ENCODE measurements at regions of chr7 and their contacts with region 1.

Region 1: GRCh38 chr7:14691597-14692203 is 210.9 kb downstream of the DGKB start:
- DNase-seq: peak in 4 of 5 donors; percentile 24 to 54 (median 34)
- H3K4me3 ChIP-seq: no peak overlapping the region
- H3K27ac ChIP-seq: no peak overlapping the region
- H3K4me1 ChIP-seq: no peaks in the 10 kb centered on the region
- H3K27me3 ChIP-seq: no peaks in the 10 kb centered on the region
- CTCF ChIP-seq: peak in 2 of 3 donors; percentile 23 to 34
- EP300 ChIP-seq: no peak
- POLR2A ChIP-seq: no peak

Region 2: DNA sequence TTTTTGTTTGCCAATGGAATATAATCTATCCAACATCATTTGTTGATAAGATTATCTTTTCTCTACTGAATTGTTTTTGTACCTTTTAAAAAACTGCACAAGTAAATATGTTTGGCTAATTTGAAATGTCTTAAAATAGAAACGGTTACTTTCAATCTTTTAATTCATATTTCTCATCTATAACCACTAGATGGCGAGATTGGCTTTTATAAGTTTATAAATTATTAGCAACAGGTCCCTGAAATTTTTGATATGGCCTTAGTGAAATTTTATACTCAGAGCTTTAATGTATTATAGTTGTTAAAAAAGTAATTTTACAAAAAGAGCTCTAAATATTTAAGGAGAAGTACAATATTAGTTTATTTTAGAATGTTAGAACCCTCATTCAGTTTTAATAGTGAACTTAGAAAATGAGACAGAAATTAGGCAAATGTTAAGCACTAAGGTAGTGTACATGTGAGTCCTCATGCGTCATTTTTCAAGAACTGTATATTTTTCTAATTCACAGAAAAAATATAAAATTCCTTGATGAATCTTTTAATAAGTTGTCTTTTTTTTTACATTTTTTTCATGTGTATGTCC is 1411.8 kb before region 1 on chr7:
- intact Hi-C with region 1: loop called in 1 of 4 experiments (anchors 10 kb)
- DNase-seq: no peak
- H3K4me3 ChIP-seq: no peak overlapping the region
- H3K27ac ChIP-seq: no peak overlapping the region
- H3K4me1 ChIP-seq: no peaks in the 10 kb centered on the region
- H3K27me3 ChIP-seq: no peaks in the 10 kb centered on the region
- CTCF ChIP-seq: no peak
- EP300 ChIP-seq: no peak
- POLR2A ChIP-seq: no peak